Mammary epithelial cell (primary cell): ENCODE measurements at regions of chr18 and their contacts with region 1.

Region 1: DNA sequence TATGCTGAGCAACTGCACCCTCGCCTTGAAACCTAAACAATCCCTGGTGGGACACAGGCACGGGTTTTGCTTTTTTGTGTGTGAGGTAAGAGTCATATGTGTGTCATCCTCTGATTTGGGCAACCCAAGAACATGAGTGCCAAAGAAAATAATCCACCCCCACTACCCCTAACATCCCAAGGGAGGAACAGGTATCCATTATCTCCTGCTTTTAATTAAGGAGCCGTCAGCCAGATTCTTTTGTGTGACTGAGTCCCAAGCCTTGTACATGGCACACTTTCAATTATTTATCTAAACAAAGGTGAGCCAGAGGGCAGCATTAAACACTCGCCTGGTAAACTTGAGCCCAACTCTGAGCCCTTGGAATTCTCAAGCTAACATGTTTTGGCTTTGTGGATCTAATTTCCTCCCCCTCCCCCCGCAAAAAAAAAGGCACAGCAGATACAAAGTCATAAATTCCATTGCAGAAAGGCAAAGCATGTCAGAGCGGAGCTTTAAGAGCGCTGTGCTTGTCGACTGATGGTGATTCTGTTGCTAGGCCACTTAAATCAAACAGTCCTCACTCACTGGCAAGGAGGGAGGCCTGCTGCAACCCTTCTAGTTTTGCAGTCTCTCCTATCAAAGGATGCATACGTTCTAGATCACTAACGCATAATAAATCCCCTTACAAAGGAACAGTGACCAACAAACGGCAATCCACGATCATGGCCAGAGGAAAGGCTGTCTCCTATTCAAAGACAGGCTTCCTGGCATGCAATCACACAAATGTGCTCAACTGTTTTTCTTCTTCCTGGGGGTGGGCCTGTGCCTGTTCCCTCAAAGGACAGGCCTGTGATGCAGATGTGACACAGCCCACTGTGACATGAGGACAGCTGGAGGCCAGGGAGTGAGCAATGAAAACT is 143.5 kb upstream of the LMAN1 start:
- DNase-seq: peak; percentile 84
- H3K4me3 ChIP-seq: no peak overlapping the region
- H3K27ac ChIP-seq: peak overlapping the region; percentile 76
- H3K4me1 ChIP-seq: peaks cover 31% of the 10 kb centered on the region
- H3K27me3 ChIP-seq: no peaks in the 10 kb centered on the region
- CTCF ChIP-seq: no peak

Region 2: DNA sequence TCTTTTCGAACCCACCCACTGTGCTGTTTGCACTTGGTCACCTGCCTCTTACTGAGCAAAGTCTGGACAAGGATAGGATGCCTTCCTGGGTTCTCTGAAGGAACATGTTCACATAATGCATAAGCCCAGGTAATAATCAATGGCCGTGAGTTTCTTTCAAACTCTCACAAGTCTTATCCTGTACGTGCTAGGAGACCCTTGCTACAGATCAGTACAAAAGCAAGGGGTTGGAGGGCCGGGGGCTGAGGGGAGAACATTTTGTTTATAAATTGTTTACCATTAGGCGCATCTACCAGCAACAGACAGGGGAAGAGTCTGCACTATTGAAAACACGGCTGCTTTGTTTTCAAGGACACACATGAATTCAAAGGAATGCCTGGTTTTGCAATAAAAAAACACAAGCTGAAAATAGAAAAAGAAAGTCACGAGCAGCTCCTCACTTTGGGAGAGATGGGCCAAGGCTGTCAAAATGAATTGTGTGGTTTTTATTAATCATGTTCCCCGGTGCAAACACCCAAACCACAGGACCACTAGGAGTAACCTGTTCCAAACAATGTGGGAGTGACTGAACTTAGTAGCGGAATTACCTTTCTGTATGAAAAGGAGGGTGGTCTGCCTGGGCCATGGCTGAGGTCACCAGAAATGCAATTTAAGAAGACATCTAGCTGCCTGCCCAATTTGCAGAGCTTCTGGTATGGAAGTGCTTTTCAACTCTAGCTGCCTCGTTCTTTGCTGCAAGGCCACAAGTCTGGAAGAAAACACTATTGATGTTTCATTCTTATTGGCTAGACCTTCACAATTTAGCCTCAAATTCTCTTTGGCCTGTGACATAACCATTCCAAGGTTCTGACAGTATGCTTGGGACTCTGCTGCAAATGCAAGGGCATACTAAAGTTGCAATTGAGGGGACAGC is 121.2 kb after region 1 on chr18:
- CTCF ChIA-PET with region 1: no interaction called
- dilution Hi-C with region 1: no loop called
- in situ Hi-C with region 1: no loop called
- intact Hi-C with region 1: loop called (anchors 5 kb)
- DNase-seq: peak; percentile 75
- H3K4me3 ChIP-seq: no peak overlapping the region
- H3K27ac ChIP-seq: no peak overlapping the region
- H3K4me1 ChIP-seq: peaks cover 23% of the 10 kb centered on the region
- H3K27me3 ChIP-seq: no peaks in the 10 kb centered on the region
- CTCF ChIP-seq: no peak